Mammary epithelial cell (primary cell): ENCODE measurements at regions of chr6 and their contacts with region 1.

Region 1: DNA sequence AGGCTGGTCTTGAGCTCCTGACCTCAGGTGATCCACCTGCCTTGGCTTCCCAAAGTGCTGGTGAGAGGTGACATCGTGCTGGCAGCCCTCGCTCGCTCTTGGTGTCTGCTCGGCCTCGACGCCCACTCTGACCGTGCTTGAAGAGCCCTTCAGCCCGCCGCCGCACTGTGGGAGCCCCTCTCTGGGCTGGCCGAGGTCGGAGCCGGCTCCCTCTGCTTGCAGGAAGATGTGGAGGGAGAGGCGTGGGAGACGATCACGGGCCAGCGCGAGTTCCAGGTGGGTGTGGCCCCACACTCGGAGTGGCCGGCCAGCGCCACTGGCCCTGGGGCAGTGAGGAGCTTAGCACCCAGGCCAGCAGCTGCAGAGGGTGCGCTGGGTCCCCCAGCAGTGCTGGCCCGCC is 48.1 kb downstream of the ZBTB9 start:
- DNase-seq: no peak
- H3K4me3 ChIP-seq: no peak overlapping the region
- H3K27ac ChIP-seq: no peak overlapping the region
- H3K4me1 ChIP-seq: no peaks in the 10 kb centered on the region
- H3K27me3 ChIP-seq: no peaks in the 10 kb centered on the region
- CTCF ChIP-seq: no peak

Region 2: GRCh38 chr6:33335916-33336315 is 166.6 kb before region 1 on chr6:
- CTCF ChIA-PET with region 1: no interaction called
- dilution Hi-C with region 1: no loop called
- in situ Hi-C with region 1: no loop called
- intact Hi-C with region 1: no loop called
- DNase-seq: no peak
- H3K4me3 ChIP-seq: no peak overlapping the region
- H3K27ac ChIP-seq: no peak overlapping the region
- H3K4me1 ChIP-seq: no peaks in the 10 kb centered on the region
- H3K27me3 ChIP-seq: no peaks in the 10 kb centered on the region
- CTCF ChIP-seq: no peak

Region 3: DNA sequence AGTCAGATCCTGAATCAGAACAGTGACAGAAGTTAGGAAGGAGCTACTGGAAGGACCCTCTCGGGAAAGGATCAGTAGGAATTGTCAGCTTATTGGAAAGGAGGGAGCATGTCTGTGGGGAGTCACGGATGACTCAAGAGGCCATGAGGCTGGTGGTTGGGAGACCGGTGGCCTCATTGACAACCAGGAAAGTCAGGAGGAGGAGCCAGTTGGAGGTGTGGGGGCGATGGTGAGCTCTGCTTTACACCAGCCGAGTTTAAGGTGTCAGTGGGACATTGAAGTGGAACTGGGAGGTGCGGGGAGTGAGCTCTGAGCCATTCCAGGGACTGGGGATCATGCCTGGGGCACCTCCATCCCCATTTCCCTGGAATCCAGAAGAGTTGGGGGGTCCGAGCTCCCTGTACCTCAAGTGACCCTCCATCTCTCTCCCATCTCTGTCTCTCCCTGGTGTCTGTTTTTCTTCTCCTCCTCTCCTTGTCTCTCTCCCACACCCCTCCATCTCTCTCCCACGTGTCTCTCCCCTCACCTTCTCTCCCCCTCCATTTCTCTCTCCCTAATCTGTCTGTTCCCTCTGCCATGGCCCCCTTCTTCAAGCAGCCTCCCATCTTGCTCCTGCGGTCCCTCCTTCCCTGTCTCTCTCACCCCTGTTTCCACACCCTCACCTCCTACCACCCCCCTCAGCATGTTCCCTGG is 62.4 kb before region 1 on chr6:
- CTCF ChIA-PET with region 1: no interaction called
- dilution Hi-C with region 1: loop called (anchors 5 kb)
- in situ Hi-C with region 1: no loop called
- intact Hi-C with region 1: no loop called
- DNase-seq: no peak
- H3K4me3 ChIP-seq: no peak overlapping the region
- H3K27ac ChIP-seq: no peak overlapping the region
- H3K4me1 ChIP-seq: no peaks in the 10 kb centered on the region
- H3K27me3 ChIP-seq: no peaks in the 10 kb centered on the region
- CTCF ChIP-seq: no peak